GM12878 (cell line): ENCODE measurements at regions of chr13 and their contacts with region 1.

Region 1: DNA sequence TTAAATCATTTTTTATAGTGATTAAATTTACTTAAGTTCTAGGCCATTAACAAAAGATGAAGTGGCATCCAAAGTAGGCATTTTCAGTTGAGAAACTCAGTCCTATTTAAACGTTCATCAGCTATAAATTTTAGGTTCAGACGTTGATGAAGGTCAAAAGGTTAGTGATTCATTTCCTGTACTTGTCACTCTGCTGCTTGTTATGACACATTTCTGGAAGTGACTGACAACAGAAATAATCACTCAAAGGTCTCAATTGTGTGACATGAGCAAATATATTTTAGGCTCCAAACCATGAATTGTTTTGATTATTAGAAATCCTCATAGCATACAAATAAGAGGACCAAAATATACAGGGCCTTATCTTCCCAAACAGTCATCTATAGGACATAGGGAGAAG is 10.3 kb upstream of the EDNRB start:
- DNase-seq: peak; percentile 34
- ATAC-seq: peak; percentile 79
- H3K4me3 ChIP-seq: no peak overlapping the region
- H3K27ac ChIP-seq: no peak overlapping the region
- H3K4me1 ChIP-seq: no peaks in the 10 kb centered on the region
- H3K27me3 ChIP-seq: no peaks in the 10 kb centered on the region
- CTCF ChIP-seq: no peak
- EP300 ChIP-seq: peak; percentile 70 to 75; a peak in 3 of 4 replicates
- POLR2A ChIP-seq: no peak
- RAD21 ChIP-seq: no peak

Region 2: DNA sequence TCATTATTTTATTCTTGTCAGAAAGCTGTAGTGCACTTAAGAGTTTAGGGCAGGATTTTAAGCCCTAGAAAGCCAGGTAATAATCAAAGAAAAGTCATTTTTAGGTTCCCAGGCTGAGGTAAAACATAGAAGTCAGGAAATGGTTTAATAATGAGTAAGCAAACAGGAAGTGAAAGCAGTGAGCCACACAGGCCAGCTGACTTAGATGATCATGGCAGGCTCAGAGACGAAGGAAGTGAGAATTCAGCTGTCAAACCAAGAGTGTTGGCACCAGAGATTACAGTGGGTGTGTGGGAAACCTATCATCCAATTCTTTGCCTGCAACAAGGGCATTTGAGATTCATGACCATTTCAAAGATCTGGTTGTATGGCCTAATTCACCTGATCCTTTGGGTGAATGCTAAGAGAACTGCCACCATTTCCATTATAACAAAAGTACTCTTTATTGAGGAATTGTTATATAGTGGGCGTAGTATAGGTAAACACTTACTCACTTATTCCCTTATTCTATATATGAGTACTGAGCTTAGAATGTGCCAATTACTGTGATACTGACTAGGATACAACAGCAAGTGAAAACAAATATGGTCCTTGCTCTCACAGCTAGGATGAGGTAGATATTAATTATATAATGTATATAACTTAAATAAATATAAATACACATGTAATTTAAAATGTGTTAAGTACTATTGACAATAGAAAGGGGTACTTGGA is 93.4 kb after region 1 on chr13:
- CTCF ChIA-PET with region 1: no interaction called
- POLR2A ChIA-PET with region 1: no interaction called
- RAD21 ChIA-PET with region 1: no interaction called
- SMC1A ChIA-PET with region 1: no interaction called
- in situ Hi-C with region 1: no loop called
- intact Hi-C with region 1: loop called (anchors 5 kb)
- DNase-seq: peak; percentile 90
- ATAC-seq: peak; percentile 100
- H3K4me3 ChIP-seq: no peak overlapping the region
- H3K27ac ChIP-seq: peak overlapping the region; percentile 31; the same call in 1 of the 2 replicates
- H3K4me1 ChIP-seq: peaks cover 3% of the 10 kb centered on the region; the same call in 1 of the 2 replicates
- H3K27me3 ChIP-seq: no peaks in the 10 kb centered on the region
- CTCF ChIP-seq: no peak
- EP300 ChIP-seq: peak; percentile 91 to 99; a peak in 3 of 4 replicates
- POLR2A ChIP-seq: no peak
- RAD21 ChIP-seq: no peak